K562 (cell line): ENCODE measurements at regions of chr6 and their contacts with region 1.

Region 1: DNA sequence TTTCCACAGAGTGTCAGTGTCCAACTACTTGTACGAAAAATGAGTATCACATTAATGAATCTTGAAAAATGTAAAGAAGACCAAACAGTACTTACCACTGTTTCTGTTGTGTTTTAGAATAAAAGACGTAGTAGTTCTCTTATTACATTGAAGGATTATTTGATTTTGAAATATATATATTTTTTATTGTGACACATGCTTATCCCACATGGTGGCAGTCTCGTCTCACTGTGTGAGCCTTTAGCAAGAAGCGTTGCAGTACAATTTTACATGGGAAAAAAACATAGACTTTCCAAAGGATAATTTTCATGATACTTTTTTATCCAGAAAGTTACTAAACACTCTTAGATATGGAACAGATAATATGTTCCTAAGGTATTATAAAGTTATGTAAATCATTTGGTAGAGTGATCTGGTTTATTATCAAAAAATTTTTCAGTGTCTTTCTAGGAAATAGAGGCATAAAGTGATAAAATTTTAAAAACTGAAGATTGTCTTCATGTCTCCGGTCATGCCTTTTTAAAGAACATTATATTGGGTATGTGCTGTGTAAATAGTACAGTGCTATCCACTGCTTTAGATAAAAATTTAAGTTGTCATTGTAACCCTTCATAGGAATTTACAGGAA is 117.5 kb upstream of the SAMD5 start:
- DNase-seq: peak in 2 of 4 experiments; percentile 24 to 34
- ATAC-seq: 0 out of 3 replicates have a peak, but pooled peaks have one; percentile 34
- H3K4me3 ChIP-seq: no peak overlapping the region
- H3K27ac ChIP-seq: no peak overlapping the region
- H3K4me1 ChIP-seq: no peaks in the 10 kb centered on the region
- H3K27me3 ChIP-seq: no peaks in the 10 kb centered on the region
- CTCF ChIP-seq: peak; percentile 43 to 74 (median 46); a peak in 5 of 6 replicates
- EP300 ChIP-seq: no peak
- POLR2A ChIP-seq: no peak
- RAD21 ChIP-seq: peak; percentile 60 to 67

Region 2: GRCh38 chr6:147022041-147022440 is 369.0 kb before region 1 on chr6:
- CTCF ChIA-PET with region 1: no interaction called
- POLR2A ChIA-PET with region 1: no interaction called
- in situ Hi-C with region 1: no loop called
- intact Hi-C with region 1: no loop called
- DNase-seq: no peak
- ATAC-seq: no peak; the same call in 2 of the 3 replicates
- H3K4me3 ChIP-seq: no peak overlapping the region
- H3K27ac ChIP-seq: no peak overlapping the region
- H3K4me1 ChIP-seq: no peaks in the 10 kb centered on the region
- H3K27me3 ChIP-seq: no peaks in the 10 kb centered on the region
- CTCF ChIP-seq: no peak
- EP300 ChIP-seq: no peak
- POLR2A ChIP-seq: no peak
- RAD21 ChIP-seq: no peak

Region 3: DNA sequence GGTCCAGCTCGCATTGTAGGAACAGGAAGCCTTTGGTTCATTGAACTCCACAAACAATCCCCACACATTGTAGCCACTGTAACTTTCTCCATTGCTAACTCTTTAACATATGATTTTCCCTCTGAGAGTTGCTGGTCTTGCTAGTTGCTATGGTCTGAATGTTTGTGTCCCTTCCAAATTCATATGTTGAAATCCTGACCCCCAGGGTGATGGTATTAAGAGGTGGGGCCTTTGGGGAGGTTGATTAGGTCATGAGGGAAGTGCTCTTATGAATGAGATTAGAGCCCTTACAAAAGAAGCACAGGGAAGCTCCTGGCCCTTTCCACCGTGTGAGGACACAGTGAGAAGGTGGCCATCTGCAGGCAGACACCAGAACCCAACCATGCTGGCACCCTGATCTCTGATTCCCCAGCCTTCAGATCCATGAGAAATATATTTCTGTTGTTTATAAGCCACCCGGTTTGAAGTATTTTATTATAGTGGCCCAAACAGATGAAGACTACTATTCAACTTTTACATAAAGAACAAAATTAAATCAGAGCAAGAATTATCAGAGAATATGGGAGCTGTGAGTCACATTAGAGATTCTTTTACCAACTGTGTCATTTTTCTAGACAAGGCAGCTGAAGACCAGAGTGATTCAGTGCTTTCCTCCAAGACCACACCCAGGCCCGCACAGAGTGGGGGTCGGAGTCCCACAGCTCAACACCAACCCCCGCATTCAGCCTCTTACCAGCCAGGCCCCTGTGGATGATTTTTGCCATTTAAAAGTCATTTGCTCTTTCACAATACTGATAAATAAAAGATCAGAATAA is 260.4 kb after region 1 on chr6:
- CTCF ChIA-PET with region 1: no interaction called
- POLR2A ChIA-PET with region 1: no interaction called
- in situ Hi-C with region 1: no loop called
- intact Hi-C with region 1: loop called (anchors 10 kb)
- DNase-seq: peak in 1 of 4 experiments; percentile 31
- ATAC-seq: peak; percentile 88
- H3K4me3 ChIP-seq: no peak overlapping the region
- H3K27ac ChIP-seq: no peak overlapping the region
- H3K4me1 ChIP-seq: no peaks in the 10 kb centered on the region
- H3K27me3 ChIP-seq: peaks cover 3 to 8% of the 10 kb centered on the region in 2 experiments; a peak in 4 of 5 replicates
- CTCF ChIP-seq: peak in 2 of 3 experiments; percentile 17 to 46; a peak in 3 of 6 replicates
- EP300 ChIP-seq: no peak
- POLR2A ChIP-seq: no peak
- RAD21 ChIP-seq: peak; percentile 52 to 59

Region 4: DNA sequence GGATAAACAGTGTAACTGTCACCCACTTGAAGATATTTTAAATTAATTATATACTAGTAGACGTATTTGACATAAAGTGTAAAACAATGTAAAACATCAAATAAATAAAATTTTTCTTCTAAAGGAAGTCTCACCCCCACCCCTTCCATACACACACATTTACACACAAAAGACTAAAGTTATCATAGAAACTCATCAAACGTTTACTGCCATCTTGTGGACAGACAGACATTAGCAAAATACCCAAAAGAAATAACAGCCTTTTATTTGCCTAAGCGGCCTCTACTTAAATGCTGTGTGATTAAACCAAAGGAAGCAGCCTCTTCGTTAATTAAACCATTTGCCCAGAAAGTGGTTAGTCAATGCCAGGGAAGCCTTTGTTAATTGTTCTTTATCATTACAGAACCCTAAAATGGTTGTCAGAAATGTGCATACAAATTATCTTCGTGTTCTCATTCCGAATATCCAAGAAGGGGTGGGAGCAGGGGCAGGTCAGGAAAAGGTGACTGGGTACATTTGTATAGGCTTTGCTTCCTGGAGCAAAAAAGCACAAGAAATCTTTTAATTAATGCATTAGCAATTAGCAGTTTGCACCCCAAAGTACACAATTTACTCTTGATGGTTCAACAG is 775.4 kb after region 1 on chr6:
- CTCF ChIA-PET with region 1: interaction called, 12 read pairs
- POLR2A ChIA-PET with region 1: no interaction called
- in situ Hi-C with region 1: no loop called
- intact Hi-C with region 1: loop called (anchors 5 kb)
- DNase-seq: peak; percentile 43 to 65 (median 60)
- ATAC-seq: peak; percentile 84
- H3K4me3 ChIP-seq: no peak overlapping the region
- H3K27ac ChIP-seq: no peak overlapping the region
- H3K4me1 ChIP-seq: peaks cover 0 to 4% of the 10 kb centered on the region in 2 experiments; a peak in 1 of 5 replicates
- H3K27me3 ChIP-seq: peaks cover 6 to 7% of the 10 kb centered on the region in 2 experiments; a peak in 3 of 5 replicates
- CTCF ChIP-seq: peak; percentile 48 to 81 (median 54); a peak in 5 of 6 replicates
- EP300 ChIP-seq: no peak
- POLR2A ChIP-seq: no peak
- RAD21 ChIP-seq: peak; percentile 74 to 85

Region 5: GRCh38 chr6:148464319-148465010 is 1073.4 kb after region 1 on chr6:
- CTCF ChIA-PET with region 1: interaction called, 12 read pairs
- POLR2A ChIA-PET with region 1: no interaction called
- in situ Hi-C with region 1: no loop called
- intact Hi-C with region 1: no loop called
- DNase-seq: peak; percentile 71 to 77 (median 72)
- ATAC-seq: peak; percentile 97
- H3K4me3 ChIP-seq: no peak overlapping the region
- H3K27ac ChIP-seq: no peak overlapping the region
- H3K4me1 ChIP-seq: no peaks in the 10 kb centered on the region
- H3K27me3 ChIP-seq: peaks cover 8 to 13% of the 10 kb centered on the region in 2 experiments; a peak in 3 of 5 replicates
- CTCF ChIP-seq: peak; percentile 91 to 98 (median 94)
- EP300 ChIP-seq: no peak
- POLR2A ChIP-seq: no peak
- RAD21 ChIP-seq: peak; percentile 81 to 85